WTC11 (cell line): ENCODE measurements at regions of chr12 and their contacts with region 1.

Region 1: DNA sequence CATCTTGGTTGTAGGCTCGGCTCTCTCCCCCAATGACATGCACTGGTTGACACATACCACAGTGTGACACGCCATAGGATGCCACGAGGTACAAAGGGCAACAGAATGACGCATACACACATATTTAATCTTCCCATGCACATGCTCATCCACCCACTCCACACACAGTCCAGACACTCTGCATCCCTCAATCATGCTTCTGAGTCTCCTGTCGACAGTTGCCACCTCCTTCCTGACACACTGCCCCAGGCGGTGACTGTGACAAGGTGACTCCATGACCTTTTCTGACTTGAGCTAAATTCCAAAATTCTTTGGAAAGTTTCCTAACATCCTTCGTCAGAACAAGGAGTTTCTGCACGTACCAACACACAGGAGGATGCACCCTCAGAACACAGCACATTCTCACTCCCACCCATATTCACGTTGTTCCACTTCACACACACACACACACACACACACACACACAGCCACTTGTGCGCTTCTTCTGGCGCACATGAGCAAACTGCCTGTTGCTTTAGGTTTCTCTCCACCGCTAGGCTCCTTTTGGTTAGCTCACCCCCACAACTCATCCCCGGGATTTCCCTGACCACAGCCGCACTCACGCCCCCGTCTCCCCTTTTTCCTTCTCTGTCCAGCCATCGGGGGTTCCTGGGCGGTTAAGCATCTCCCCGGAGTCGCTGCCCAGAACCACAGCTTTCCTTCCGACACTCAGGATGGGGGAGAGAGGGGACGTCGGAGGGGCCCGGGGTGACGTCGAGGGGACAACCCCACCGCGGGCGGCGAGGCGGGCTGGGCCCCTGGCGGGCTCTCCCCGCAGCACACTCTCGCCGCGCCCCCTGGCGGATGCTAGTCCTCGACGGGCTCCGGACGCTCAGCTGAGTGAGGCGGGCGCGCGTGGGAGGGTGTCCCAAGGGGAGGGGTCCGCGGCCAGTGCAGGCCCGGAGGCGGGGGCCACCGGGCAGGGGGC is 524 bp upstream of the WNT1 start:
- DNase-seq: peak; percentile 75
- ATAC-seq: peak; percentile 3
- H3K4me3 Mint-ChIP-seq: peak overlapping the region; percentile 45
- H3K27ac Mint-ChIP-seq: no peak overlapping the region
- H3K4me1 Mint-ChIP-seq: peaks cover 31% of the 10 kb centered on the region
- H3K27me3 Mint-ChIP-seq: peaks cover 100% of the 10 kb centered on the region
- CTCF ChIP-seq: peak; percentile 77; the same call in 1 of the 2 replicates

Region 2: DNA sequence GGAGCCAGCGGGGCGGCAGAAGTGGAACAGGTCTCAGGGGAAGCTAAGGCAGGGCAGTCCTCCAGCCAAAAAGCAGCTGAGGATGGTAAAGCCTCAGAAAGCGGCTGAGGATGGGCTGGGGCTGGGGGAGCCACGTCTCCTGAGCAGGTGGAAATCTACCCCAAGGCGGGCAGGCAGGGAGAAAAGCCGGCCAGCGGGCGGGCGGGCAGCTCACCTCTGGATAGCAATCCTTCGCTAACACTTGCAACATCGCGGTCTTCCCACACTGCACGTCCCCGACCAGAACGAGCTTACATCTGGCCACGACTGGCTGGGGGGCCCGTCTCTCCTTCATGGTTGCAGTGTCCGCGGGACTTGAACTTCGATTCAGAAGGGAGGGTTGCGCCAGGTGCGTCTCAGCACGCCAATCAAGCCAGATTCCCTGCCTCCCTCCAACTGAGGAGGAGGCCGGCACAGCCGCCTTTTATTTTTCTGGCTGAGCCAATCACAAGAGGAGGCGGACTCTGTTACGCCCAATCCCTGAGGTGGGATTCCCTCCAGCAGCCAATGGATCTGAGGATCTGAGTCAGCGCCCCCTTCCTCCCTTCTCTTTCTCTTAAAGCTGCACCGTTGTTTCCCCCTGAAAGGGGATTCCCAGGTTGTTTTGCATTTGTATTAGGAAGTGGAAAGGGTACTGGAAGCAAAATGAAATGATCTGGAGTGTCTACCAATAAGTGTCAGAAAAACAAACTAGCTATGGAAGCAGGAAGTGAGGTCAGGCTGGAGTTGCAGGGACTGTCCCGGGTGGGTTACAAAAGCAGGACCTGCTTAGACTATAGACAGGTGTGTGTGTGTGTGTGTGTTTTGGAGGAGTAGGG is 111.9 kb before region 1 on chr12 and contains the start of gene RND1:
- CTCF ChIA-PET with region 1: interaction called, 12 read pairs
- POLR2A ChIA-PET with region 1: interaction called, 4 read pairs
- DNase-seq: peak; percentile 92
- ATAC-seq: peak; percentile 96
- H3K4me3 Mint-ChIP-seq: peak within 1 kb of the TSS; percentile 91
- H3K27ac Mint-ChIP-seq: peak within 1 kb of the TSS; percentile 94
- H3K4me1 Mint-ChIP-seq: peaks cover 44% of the 10 kb centered on the region
- H3K27me3 Mint-ChIP-seq: peaks cover 6% of the 10 kb centered on the region; the same call in 1 of the 2 replicates
- CTCF ChIP-seq: no peak
- total RNA-seq, gene RND1: 7.6 to 9.1 TPM (median 8.5 TPM) in 3 replicates

Region 3: GRCh38 chr12:48917857-48918537 is 59.6 kb before region 1 on chr12:
- CTCF ChIA-PET with region 1: no interaction called
- POLR2A ChIA-PET with region 1: no interaction called
- DNase-seq: no peak
- ATAC-seq: no peak
- H3K4me3 Mint-ChIP-seq: no peak overlapping the region
- H3K27ac Mint-ChIP-seq: peak overlapping the region; percentile 71
- H3K4me1 Mint-ChIP-seq: no peaks in the 10 kb centered on the region
- H3K27me3 Mint-ChIP-seq: no peaks in the 10 kb centered on the region
- CTCF ChIP-seq: no peak

Region 4: DNA sequence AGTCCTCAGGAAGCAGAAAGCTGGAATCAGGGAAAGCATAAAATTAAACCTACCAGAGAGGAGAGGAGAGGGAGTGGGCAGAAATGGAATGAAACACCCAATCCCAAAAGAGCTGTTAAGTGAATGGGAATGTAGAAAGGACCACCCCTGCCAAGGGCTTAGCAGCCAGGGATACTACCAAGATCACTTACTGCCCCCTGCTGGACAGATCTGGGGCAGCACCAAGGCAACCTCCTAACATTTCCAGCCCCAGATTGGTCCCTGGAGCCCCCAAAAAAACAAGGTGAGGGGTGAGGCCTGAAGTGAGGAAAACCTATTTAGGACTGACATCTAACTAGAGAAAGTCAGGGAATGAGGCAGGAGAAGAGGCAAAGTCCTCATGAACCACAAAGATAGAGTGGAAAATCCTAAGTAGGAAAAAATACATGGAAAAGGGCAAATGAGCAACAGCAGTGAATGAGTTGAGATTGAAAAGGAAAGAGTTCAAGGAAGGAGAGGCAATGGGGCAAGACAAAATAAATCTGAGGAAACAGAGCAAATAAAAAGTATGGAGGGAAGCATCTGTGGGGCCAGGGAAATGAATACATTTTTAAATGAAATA is 41.1 kb before region 1 on chr12:
- CTCF ChIA-PET with region 1: interaction called, 23 read pairs
- POLR2A ChIA-PET with region 1: no interaction called
- DNase-seq: peak; percentile 89
- ATAC-seq: peak; percentile 88
- H3K4me3 Mint-ChIP-seq: no peak overlapping the region
- H3K27ac Mint-ChIP-seq: peak overlapping the region; percentile 46
- H3K4me1 Mint-ChIP-seq: no peaks in the 10 kb centered on the region
- H3K27me3 Mint-ChIP-seq: no peaks in the 10 kb centered on the region
- CTCF ChIP-seq: peak; percentile 70

Region 5: GRCh38 chr12:48957141-48958048 is 20.2 kb before region 1 on chr12 and contains the start of gene ARF3:
- CTCF ChIA-PET with region 1: interaction called, 38 read pairs
- POLR2A ChIA-PET with region 1: interaction called, 4 read pairs
- DNase-seq: peak; percentile 98
- ATAC-seq: peak; percentile 89
- H3K4me3 Mint-ChIP-seq: peak within 1 kb of the TSS; percentile 95
- H3K27ac Mint-ChIP-seq: peak within 1 kb of the TSS; percentile 97
- H3K4me1 Mint-ChIP-seq: peaks cover 31% of the 10 kb centered on the region
- H3K27me3 Mint-ChIP-seq: peaks cover 7% of the 10 kb centered on the region; the same call in 1 of the 2 replicates
- CTCF ChIP-seq: no peak
- total RNA-seq, gene ARF3: 238 to 256 TPM (median 248 TPM) in 3 replicates

Region 6: GRCh38 chr12:49018261-49019119 is 40.9 kb after region 1 on chr12 and contains the start of gene PRKAG1:
- CTCF ChIA-PET with region 1: interaction called, 10 read pairs
- POLR2A ChIA-PET with region 1: no interaction called
- DNase-seq: peak; percentile 97
- ATAC-seq: peak; percentile 94
- H3K4me3 Mint-ChIP-seq: peak within 1 kb of the TSS; percentile 91
- H3K27ac Mint-ChIP-seq: peak within 1 kb of the TSS; percentile 99
- H3K4me1 Mint-ChIP-seq: peaks cover 16% of the 10 kb centered on the region
- H3K27me3 Mint-ChIP-seq: peaks cover 6% of the 10 kb centered on the region
- CTCF ChIP-seq: no peak
- total RNA-seq, gene PRKAG1: 37.9 to 41.6 TPM (median 38.0 TPM) in 3 replicates